Endothelial cell of umbilical vein (primary cell): ENCODE measurements at regions of chr3 and their contacts with region 1.

Region 1: GRCh38 chr3:127697551-127698240 is 24.9 kb downstream of the ABTB1 start:
- DNase-seq: peak; percentile 92
- H3K4me3 ChIP-seq: no peak overlapping the region
- H3K27ac ChIP-seq: peak overlapping the region; percentile 91
- H3K4me1 ChIP-seq: peaks cover 19% of the 10 kb centered on the region
- H3K27me3 ChIP-seq: no peaks in the 10 kb centered on the region
- CTCF ChIP-seq: no peak
- POLR2A ChIP-seq: no peak

Region 2: DNA sequence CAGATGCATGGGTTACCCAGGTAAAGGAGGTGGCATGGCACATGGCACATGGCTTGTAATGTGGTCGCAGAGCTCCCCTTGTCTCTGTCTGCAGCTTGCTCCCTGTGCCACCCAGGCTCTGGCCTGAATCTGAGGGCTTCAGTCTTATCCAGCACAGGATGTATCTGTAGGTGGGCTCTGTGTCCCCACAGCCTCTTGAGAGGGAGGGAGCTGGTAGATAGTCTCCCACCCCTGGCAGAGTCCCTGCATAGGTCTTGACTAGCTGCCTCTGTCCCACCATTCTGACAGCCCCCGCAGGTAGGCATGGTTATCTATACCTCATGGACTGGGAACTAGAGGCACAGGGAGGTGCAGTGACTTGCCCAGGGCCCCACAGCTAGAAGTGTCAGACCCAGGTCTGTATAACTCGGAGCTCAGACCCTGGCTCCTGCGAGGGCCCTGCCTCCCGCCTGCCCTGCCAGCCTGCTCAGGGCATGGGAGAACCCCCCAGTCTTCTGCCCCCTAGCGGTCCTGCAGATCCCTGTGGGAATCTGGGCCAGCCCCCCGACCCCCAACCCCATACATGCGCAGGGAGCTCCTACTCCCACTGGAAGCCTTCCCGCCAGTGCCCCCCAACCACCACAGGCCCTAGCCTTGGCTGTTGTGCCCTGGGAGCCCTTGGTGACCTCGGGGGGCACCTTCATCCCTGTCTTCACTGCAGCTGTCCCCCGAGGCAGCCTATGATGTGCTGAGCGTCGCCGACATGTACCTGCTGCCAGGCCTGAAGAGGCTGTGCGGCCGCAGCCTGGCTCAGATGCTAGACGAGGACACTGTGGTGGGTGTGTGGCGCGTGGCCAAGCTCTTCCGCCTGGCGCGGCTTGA is 18.2 kb before region 1 on chr3:
- CTCF ChIA-PET with region 1: interaction called, 16 read pairs
- POLR2A ChIA-PET with region 1: interaction called, 3 read pairs
- dilution Hi-C with region 1: no loop called
- intact Hi-C with region 1: no loop called
- DNase-seq: no peak
- H3K4me3 ChIP-seq: no peak overlapping the region
- H3K27ac ChIP-seq: no peak overlapping the region
- H3K4me1 ChIP-seq: no peaks in the 10 kb centered on the region
- H3K27me3 ChIP-seq: no peaks in the 10 kb centered on the region
- CTCF ChIP-seq: peak in 1 of 2 donors; percentile 29
- POLR2A ChIP-seq: no peak

Region 3: DNA sequence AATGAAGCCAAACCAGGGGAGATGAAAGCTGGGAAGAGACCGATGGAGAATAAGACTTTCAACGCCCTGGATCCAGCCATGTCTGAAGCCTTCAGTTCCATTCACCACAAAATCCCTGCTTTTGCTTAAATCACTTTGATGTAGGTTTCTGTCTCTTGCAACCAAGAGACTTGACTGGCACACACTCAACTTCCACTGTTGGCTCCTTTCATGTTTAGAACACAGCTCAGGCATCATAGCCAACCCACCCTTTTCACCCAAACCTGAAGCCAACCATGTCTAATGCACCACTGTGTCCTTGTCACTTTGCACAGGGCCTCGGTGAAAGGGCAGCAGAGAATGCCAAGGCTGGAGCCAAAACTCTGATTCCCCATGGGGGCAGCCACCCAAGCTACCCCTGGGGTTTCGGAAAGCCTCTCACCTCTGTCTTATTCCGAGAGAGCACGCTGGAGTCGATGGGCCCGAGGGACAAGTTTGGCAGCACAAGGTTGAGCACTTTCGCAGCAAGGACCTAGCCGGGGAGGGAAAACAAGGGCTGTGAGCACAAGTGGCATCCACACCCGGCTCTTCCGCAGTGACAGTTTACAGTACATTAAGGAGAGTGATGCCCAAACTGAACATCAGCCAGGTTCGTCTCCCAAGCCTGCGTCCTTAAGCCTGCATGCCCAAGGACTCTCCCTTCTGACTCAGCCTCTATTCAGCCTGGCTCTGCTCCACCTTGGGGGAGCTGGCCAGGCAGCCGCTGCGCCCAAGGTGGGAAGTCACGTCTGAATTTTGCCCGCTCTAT is 12.7 kb after region 1 on chr3:
- CTCF ChIA-PET with region 1: interaction called, 26 read pairs
- POLR2A ChIA-PET with region 1: no interaction called
- dilution Hi-C with region 1: no loop called
- intact Hi-C with region 1: no loop called
- DNase-seq: no peak
- H3K4me3 ChIP-seq: no peak overlapping the region
- H3K27ac ChIP-seq: no peak overlapping the region
- H3K4me1 ChIP-seq: peaks cover 21% of the 10 kb centered on the region
- H3K27me3 ChIP-seq: no peaks in the 10 kb centered on the region
- CTCF ChIP-seq: no peak
- POLR2A ChIP-seq: no peak

Region 4: DNA sequence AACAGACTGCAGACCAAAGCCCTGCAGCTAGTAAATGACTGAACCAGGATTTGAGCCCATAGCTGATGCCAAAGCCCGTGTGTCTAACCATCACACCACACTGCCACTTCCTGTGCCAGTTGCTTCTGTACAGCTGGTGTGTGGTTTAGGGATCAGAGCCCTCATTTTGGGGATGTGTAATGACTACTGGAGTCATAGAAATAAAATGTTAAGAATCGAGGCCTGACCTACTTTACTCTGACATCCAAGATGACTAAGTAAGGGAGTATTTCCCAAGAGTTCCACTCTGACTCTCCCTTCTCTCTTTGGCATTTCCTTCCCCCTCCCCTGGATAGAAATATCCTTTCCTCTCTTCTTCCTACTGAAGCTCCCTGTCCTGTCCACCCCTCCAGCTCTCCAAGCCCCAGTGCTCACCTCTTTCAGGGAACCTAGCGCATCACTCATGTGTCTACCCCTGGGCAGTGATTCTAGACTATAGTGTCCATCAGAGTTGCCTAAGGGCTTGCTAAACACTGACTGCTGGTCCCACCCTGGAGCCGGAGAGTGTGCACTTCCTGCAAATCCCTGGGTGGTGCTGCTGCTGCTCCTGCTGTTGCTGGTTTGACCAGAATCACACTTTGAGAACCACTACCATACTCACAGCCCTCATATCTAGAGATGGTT is 70.8 kb after region 1 on chr3:
- CTCF ChIA-PET with region 1: interaction called, 4 read pairs
- POLR2A ChIA-PET with region 1: no interaction called
- dilution Hi-C with region 1: no loop called
- intact Hi-C with region 1: loop called (anchors 1 kb)
- DNase-seq: peak; percentile 70
- H3K4me3 ChIP-seq: no peak overlapping the region
- H3K27ac ChIP-seq: peak overlapping the region; percentile 81
- H3K4me1 ChIP-seq: peaks cover 25% of the 10 kb centered on the region
- H3K27me3 ChIP-seq: no peaks in the 10 kb centered on the region
- CTCF ChIP-seq: no peak
- POLR2A ChIP-seq: no peak

Region 5: GRCh38 chr3:127822698-127823425 is 125.2 kb after region 1 on chr3:
- CTCF ChIA-PET with region 1: interaction called, 74 read pairs
- POLR2A ChIA-PET with region 1: no interaction called
- dilution Hi-C with region 1: no loop called
- intact Hi-C with region 1: loop called (anchors 2 kb)
- DNase-seq: no peak
- H3K4me3 ChIP-seq: peak overlapping the region; percentile 65 to 98 (median 69)
- H3K27ac ChIP-seq: peak overlapping the region; percentile 44
- H3K4me1 ChIP-seq: peaks cover 23% of the 10 kb centered on the region
- H3K27me3 ChIP-seq: no peaks in the 10 kb centered on the region
- CTCF ChIP-seq: peak in 1 of 2 donors; percentile 4
- POLR2A ChIP-seq: peak; percentile 39

Region 6: DNA sequence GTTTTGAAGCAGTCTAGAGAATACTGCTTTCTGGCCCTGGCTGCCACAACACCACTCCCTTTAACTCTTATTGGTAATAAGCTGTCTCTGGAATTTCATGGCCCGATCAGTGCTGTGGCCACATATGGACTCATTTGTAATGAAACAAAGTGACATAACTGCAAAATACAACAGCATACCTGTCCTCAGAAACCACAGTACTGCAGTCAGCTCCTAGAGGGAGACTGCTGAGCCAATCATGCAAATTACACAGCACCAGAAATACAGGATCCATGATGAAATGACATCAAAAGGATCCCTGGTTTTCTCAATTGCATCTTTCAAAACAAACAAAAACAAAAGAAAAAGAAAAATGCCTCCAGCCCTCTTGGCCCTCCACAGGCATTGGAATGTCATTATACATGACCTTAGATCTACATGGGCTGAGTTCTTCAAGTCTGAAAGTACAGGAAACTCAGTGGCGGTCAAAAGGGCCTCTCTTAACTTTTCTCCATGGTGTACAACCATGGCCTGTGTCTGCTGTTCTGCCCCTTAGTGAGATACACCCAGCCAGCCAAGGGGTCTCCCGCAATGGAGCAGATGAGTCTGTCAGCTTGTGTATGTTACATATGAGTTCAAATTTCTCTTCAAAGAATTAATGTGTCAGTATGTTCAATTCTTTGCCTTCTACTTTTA is 192.4 kb after region 1 on chr3:
- CTCF ChIA-PET with region 1: no interaction called
- POLR2A ChIA-PET with region 1: no interaction called
- dilution Hi-C with region 1: no loop called
- intact Hi-C with region 1: no loop called
- DNase-seq: no peak
- H3K4me3 ChIP-seq: no peak overlapping the region
- H3K27ac ChIP-seq: no peak overlapping the region
- H3K4me1 ChIP-seq: no peaks in the 10 kb centered on the region
- H3K27me3 ChIP-seq: peaks cover 0 to 9% of the 10 kb centered on the region in 2 experiments
- CTCF ChIP-seq: no peak
- POLR2A ChIP-seq: no peak

Region 7: DNA sequence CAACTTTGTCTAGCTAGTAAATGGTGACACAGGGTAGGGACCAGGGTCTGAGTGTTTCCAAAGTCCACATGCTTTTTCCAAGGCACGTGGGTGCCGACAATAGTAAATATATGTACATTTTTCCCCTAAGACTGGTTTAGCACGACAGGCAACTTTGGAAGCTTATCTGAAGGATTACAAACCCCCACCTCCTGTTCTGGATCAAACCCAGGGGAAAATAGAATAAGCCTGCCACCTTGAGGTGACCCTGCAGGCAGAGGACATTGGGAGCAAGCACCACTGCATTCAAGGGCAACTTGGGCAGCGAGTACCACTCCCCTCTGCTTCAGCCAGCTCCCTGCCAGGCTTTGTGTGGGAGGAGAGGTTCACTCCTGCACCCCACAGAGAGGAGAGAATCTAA is 262.1 kb after region 1 on chr3:
- CTCF ChIA-PET with region 1: interaction called, 14 read pairs
- POLR2A ChIA-PET with region 1: no interaction called
- dilution Hi-C with region 1: no loop called
- intact Hi-C with region 1: no loop called
- DNase-seq: peak; percentile 31
- H3K4me3 ChIP-seq: no peak overlapping the region
- H3K27ac ChIP-seq: no peak overlapping the region
- H3K4me1 ChIP-seq: no peaks in the 10 kb centered on the region
- H3K27me3 ChIP-seq: peaks cover 0 to 11% of the 10 kb centered on the region in 2 experiments
- CTCF ChIP-seq: peak in 1 of 2 donors; percentile 25
- POLR2A ChIP-seq: no peak

Region 8: DNA sequence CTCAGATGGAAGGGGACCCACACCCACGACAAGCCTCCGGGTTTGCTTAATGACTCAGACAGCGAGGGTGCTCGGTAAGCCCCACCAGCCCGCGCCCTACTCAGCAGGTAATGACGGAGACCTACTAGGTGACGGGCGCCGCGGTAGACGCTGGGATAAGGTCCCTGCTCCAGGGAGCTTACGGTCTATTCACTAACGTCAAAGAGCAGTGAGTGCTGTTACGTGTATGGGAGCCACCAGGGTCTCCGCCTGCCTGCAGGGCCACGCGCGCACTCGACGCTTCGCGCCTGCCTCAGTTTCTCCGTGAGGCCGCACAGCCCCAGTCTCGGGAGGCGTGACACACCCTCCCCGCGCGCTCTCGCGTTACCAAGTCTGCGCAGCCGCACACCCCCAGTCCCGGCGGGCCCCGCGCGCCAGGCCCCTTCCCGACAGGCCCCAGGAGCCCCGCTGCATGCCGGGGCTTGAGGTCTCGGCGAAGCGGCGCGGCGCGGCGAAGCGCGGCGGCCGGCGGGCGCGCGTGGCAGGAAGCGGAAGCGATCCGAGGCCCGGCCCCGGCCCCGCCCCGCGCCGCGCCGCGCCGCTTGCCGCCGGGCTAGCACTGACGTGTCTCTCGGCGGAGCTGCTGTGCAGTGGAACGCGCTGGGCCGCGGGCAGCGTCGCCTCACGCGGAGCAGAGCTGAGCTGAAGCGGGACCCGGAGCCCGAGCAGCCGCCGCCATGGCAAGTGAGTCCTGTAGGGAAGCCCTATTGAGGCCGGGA is 354.3 kb after region 1 on chr3 and contains the start of gene SEC61A1:
- CTCF ChIA-PET with region 1: no interaction called
- POLR2A ChIA-PET with region 1: no interaction called
- dilution Hi-C with region 1: no loop called
- intact Hi-C with region 1: loop called (anchors 2 kb)
- DNase-seq: peak; percentile 95
- H3K4me3 ChIP-seq: peak within 1 kb of the TSS; percentile 90 to 99 (median 99)
- H3K27ac ChIP-seq: peak within 1 kb of the TSS; percentile 92
- H3K4me1 ChIP-seq: peaks cover 39% of the 10 kb centered on the region
- H3K27me3 ChIP-seq: peaks cover 5 to 14% of the 10 kb centered on the region in 2 experiments
- CTCF ChIP-seq: no peak
- POLR2A ChIP-seq: peak; percentile 75
- total RNA-seq, gene SEC61A1: 280 and 312 TPM in 2 replicates